Aorta (tissue), 5 donors: ENCODE measurements at regions of chr9 and their contacts with region 1.

Region 1: DNA sequence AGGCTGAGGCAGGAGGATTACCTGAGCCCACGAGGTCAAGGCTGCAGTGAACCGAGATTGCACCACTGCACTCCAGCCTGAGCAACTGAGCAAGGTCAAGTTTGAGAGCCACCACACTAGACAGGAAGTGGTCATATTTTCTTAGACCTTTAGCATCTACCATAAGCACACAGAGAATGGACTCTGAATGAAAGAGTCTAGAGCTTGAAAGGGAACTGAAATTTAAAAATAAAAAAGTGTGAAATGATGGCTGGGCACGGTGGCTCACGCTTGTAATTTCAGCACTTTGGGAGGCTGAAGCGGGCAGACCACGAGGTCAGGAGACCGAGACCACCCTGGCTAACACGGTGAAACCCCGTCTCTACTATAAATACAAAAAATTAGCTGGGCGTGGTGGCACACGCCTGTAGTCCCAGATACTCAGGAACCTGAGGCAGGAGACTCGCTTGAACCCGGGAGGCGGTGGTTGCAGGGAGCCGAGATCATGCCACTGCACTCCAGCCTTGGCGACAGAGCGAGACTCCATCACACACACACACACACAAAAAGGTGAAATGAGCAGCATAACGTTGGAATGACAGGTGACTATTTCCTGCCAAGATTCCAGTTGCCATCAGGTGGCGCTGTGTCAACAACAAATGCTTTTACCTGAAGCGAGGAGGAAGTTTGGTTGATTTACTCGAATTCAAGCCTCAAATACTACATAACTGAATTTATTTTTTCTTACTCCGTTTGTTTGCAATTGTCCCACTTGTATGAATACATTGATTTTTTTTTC is 21.3 kb upstream of the AK3 start:
- DNase-seq: peak; percentile 75 to 82
- ATAC-seq: peak; percentile 79
- H3K4me3 ChIP-seq: no peak overlapping the region
- H3K27ac ChIP-seq: no peak overlapping the region
- H3K4me1 ChIP-seq: no peaks in the 10 kb centered on the region
- H3K27me3 ChIP-seq: no peaks in the 10 kb centered on the region

Region 2: DNA sequence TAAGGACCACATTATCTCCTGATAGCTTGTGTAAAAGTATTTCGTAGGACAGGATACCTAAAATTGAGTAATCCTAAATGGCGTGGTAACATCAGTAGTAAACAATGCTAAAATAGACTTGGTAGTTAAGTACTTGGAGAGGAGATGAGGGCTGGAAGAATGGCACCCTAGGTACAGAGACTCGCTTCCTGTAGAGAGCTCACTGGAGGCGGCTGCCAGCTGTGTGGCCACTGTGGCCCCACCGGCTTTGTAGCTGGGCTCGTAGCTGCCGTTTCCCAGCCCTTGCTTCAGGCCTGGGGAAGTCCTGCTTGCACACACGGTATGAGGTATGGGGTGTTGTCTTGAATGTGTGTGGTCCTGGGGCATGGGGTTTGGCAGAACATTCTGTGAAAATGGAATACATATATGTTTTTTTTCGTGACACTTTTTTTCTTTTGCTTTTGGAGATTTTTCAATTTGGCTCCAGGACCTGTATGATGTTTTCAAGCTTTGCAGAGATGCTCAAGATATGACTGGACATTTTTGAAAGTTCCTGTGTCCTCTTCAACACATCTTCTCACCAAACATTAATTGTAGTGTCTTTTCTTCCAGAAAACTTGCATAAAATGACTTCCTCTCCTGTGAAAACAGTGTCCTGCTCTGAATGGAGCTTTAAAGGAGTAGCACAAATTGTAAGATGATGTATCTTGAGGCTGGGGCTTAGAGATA is 88.5 kb after region 1 on chr9:
- intact Hi-C with region 1: loop called in 1 of 2 experiments (anchors 5 kb)
- DNase-seq: no peak
- ATAC-seq: peak; percentile 53
- H3K4me3 ChIP-seq: no peak overlapping the region
- H3K27ac ChIP-seq: peak overlapping the region in 1 of 2 donors; percentile 81
- H3K4me1 ChIP-seq: peaks cover 0 to 7% of the 10 kb centered on the region in 2 donors
- H3K27me3 ChIP-seq: no peaks in the 10 kb centered on the region

Region 3: DNA sequence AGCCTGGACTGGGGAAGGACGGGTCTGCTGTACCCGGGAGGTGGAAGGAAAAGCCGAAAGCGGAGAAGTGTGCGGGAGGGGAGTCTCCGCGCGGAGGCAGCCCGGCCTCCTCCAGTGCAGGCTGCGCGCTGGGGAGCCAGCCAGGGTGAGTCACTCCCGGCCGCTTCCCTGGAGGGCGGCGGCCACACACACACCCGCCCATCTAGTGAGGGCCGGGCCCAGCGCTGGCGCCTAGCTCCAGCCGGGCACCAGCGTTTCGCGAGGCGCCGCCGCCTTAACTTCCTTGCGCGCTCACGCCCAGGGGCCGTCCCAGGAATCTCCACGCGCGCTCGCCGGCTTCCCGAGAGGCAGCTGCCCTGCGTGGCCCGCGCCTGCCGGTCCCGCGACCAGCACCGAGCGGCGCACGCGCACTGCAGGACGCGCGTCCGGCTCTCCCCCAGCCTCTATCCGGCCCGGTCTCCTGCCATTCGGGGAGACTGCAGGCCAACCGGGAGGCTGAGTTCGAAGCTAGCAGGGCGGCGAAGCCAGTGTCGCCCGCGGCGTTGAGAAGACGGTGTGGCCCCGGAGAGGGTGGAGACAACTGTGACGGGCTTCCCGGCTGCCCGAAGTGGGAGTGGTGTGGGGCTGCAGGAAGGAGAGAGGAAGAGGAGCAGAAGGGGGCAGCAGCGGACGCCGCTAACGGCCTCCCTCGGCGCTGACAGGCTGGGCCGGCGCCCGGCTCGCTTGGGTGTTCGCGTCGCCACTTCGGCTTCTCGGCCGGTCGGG is 222.5 kb after region 1 on chr9 and contains the start of gene JAK2:
- intact Hi-C with region 1: loop called (anchors 1 to 2 kb)
- DNase-seq: peak; percentile 96 to 97
- ATAC-seq: peak; percentile 97
- H3K4me3 ChIP-seq: peak within 1 kb of the TSS; percentile 77 to 98
- H3K27ac ChIP-seq: peak within 1 kb of the TSS; percentile 71 to 90
- H3K4me1 ChIP-seq: peaks cover 0 to 2% of the 10 kb centered on the region in 2 donors
- H3K27me3 ChIP-seq: no peaks in the 10 kb centered on the region
- total RNA-seq, gene JAK2: 77.4 to 144 TPM

Region 4: DNA sequence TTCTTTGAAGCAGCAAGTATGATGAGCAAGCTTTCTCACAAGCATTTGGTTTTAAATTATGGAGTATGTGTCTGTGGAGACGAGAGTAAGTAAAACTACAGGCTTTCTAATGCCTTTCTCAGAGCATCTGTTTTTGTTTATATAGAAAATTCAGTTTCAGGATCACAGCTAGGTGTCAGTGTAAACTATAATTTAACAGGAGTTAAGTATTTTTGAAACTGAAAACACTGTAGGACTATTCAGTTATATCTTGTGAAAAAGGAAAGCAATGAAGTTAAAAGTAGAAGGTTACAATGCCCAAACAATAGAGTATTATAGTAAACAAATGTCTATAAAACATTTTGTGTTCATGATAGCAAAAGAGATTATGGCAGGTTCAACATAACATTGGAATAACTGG is 311.4 kb after region 1 on chr9:
- intact Hi-C with region 1: loop called in 1 of 2 experiments (anchors 10 kb)
- DNase-seq: no peak
- ATAC-seq: no peak
- H3K4me3 ChIP-seq: no peak overlapping the region
- H3K27ac ChIP-seq: no peak overlapping the region
- H3K4me1 ChIP-seq: peaks cover 0 to 4% of the 10 kb centered on the region in 2 donors
- H3K27me3 ChIP-seq: no peaks in the 10 kb centered on the region

Region 5: DNA sequence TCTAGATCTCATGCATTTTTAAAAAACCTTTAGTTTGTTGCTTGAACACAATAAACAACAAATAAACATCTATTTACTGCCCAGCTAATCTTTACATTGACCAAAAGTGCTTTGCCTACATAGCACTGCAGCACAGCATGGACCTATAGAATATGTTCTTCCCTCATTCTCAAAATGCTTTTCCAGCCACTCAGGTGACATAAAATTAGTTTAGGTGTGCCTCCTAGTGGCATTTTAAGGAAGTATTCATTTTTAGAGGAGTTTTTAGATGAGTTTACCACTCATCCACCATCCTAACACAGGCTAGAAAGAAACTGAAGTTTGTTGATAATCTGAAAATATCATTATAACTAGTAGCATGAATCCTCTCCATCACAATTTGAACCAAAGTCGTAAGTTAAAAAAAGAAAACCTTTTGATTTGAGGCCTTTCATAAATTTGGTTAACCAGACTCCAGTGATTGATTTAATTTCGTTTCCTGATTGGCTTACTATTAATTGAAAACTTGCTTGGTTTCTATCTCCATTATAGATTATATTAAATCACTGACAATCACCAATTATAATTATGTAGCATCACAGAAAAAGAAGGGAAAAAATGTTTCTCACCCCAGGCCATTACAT is 662.8 kb after region 1 on chr9:
- intact Hi-C with region 1: loop called in 1 of 2 experiments (anchors 5 kb)
- DNase-seq: no peak
- ATAC-seq: no peak
- H3K4me3 ChIP-seq: no peak overlapping the region
- H3K27ac ChIP-seq: no peak overlapping the region
- H3K4me1 ChIP-seq: no peaks in the 10 kb centered on the region
- H3K27me3 ChIP-seq: no peaks in the 10 kb centered on the region